Esophagus squamous epithelium (tissue), 5 donors: ENCODE measurements at regions of chr16 and their contacts with region 1.

Region 1: GRCh38 chr16:11255737-11256660 is at the start of gene SOCS1:
- DNase-seq: no peak
- H3K4me3 ChIP-seq: peak within 1 kb of the TSS; percentile 71 to 92 (median 80)
- H3K27ac ChIP-seq: peak within 1 kb of the TSS; percentile 97 to 98 (median 97)
- H3K4me1 ChIP-seq: peaks cover 29 to 70% (median 29%) of the 10 kb centered on the region in 3 donors
- H3K27me3 ChIP-seq: peaks cover 0 to 25% (median 0%) of the 10 kb centered on the region in 4 donors
- CTCF ChIP-seq: peak; percentile 84 to 98 (median 94)
- POLR2A ChIP-seq: peak in 3 of 4 donors; percentile 84 to 98 (median 97)
- total RNA-seq, gene SOCS1: 0.42 to 9.3 (median 3.7) TPM

Region 2: GRCh38 chr16:10971560-10971961 is 284.4 kb before region 1 on chr16:
- intact Hi-C with region 1: loop called (anchors 5 kb)
- DNase-seq: no peak
- H3K4me3 ChIP-seq: no peak overlapping the region
- H3K27ac ChIP-seq: peak overlapping the region in 3 of 4 donors; percentile 45 to 56 (median 51)
- H3K4me1 ChIP-seq: peaks cover 3 to 19% (median 7%) of the 10 kb centered on the region in 3 donors
- H3K27me3 ChIP-seq: no peaks in the 10 kb centered on the region
- CTCF ChIP-seq: peak; percentile 72 to 88 (median 78)
- POLR2A ChIP-seq: no peak

Region 3: DNA sequence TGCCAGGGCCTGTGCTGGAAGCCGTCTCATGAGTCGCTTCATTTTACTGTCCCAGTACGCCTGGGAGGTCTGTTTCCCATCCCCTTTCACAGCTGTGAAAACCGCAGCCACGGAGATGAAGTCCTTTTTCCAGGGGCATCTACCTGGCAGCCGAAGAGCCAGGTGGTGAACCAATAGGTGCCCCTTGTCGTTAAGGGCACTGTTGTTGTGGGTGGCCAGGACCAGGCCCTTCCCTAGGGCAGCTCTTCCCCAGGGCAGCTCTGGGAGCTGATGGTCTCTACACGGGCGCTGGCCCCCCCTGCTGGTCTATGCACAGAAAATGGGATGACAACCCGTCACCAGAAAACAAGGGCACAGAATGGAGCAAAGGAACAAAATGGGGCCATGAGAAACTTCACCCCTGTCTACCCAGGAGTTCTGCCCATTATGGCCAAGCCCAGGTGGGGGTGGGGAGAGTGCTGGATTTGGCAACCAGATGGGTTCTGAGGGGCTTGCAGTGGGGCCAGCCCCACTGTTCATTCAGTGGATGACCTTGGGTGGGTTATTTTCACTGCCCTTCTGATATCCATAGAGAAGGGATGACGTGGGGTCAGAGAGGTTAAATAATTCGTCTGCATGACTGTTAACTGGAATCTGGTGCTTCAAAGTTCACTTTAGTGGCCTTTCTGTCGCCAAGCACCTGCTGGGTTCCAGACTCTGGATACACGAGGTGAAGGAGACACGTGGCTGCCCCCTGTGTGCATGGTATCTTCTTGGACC is 100.8 kb after region 1 on chr16:
- intact Hi-C with region 1: loop called (anchors 10 kb)
- DNase-seq: no peak
- H3K4me3 ChIP-seq: no peak overlapping the region
- H3K27ac ChIP-seq: peak overlapping the region; percentile 73 to 83 (median 76)
- H3K4me1 ChIP-seq: peaks cover 30 to 78% (median 52%) of the 10 kb centered on the region in 3 donors
- H3K27me3 ChIP-seq: no peaks in the 10 kb centered on the region
- CTCF ChIP-seq: peak; percentile 25 to 51 (median 38)
- POLR2A ChIP-seq: no peak